H1 (cell line): ENCODE measurements at regions of chr1 and their contacts with region 1.

Region 1: GRCh38 chr1:169794530-169795416 is at the start of gene METTL18:
- DNase-seq: peak; percentile 86 to 88
- H3K4me3 ChIP-seq: peak within 1 kb of the TSS; percentile 67 to 98 (median 90)
- H3K27ac ChIP-seq: peak within 1 kb of the TSS; percentile 96
- H3K4me1 ChIP-seq: peaks cover 0 to 6% (median 4%) of the 10 kb centered on the region in 4 experiments; a peak in 3 of 7 replicates
- H3K27me3 ChIP-seq: no peaks in the 10 kb centered on the region
- CTCF ChIP-seq: peak; percentile 17 to 46 (median 30); a peak in 2 of 4 replicates
- EP300 ChIP-seq: no peak
- POLR2A ChIP-seq: peak; percentile 45 to 86
- RAD21 ChIP-seq: no peak; a peak in 2 of 4 replicates
- total RNA-seq, gene METTL18: 6.0 and 7.6 TPM in 2 replicates

Region 2: GRCh38 chr1:169784094-169784493 is 10.7 kb before region 1 on chr1:
- CTCF ChIA-PET with region 1: interaction called, 8 read pairs
- POLR2A ChIA-PET with region 1: interaction called, 11 read pairs
- DNase-seq: no peak
- H3K4me3 ChIP-seq: no peak overlapping the region
- H3K27ac ChIP-seq: no peak overlapping the region
- H3K4me1 ChIP-seq: peaks cover 0 to 17% (median 8%) of the 10 kb centered on the region in 4 experiments; a peak in 5 of 7 replicates
- H3K27me3 ChIP-seq: no peaks in the 10 kb centered on the region
- CTCF ChIP-seq: no peak
- EP300 ChIP-seq: no peak
- POLR2A ChIP-seq: no peak
- RAD21 ChIP-seq: no peak

Region 3: GRCh38 chr1:169809370-169810095 is 14.8 kb after region 1 on chr1:
- CTCF ChIA-PET with region 1: interaction called, 14 read pairs
- POLR2A ChIA-PET with region 1: interaction called, 3 read pairs
- DNase-seq: no peak
- H3K4me3 ChIP-seq: no peak overlapping the region
- H3K27ac ChIP-seq: no peak overlapping the region
- H3K4me1 ChIP-seq: no peaks in the 10 kb centered on the region
- H3K27me3 ChIP-seq: no peaks in the 10 kb centered on the region
- CTCF ChIP-seq: peak in 2 of 3 experiments; percentile 10 to 35; a peak in 2 of 4 replicates
- EP300 ChIP-seq: no peak
- POLR2A ChIP-seq: no peak
- RAD21 ChIP-seq: peak; percentile 58 to 62

Region 4: DNA sequence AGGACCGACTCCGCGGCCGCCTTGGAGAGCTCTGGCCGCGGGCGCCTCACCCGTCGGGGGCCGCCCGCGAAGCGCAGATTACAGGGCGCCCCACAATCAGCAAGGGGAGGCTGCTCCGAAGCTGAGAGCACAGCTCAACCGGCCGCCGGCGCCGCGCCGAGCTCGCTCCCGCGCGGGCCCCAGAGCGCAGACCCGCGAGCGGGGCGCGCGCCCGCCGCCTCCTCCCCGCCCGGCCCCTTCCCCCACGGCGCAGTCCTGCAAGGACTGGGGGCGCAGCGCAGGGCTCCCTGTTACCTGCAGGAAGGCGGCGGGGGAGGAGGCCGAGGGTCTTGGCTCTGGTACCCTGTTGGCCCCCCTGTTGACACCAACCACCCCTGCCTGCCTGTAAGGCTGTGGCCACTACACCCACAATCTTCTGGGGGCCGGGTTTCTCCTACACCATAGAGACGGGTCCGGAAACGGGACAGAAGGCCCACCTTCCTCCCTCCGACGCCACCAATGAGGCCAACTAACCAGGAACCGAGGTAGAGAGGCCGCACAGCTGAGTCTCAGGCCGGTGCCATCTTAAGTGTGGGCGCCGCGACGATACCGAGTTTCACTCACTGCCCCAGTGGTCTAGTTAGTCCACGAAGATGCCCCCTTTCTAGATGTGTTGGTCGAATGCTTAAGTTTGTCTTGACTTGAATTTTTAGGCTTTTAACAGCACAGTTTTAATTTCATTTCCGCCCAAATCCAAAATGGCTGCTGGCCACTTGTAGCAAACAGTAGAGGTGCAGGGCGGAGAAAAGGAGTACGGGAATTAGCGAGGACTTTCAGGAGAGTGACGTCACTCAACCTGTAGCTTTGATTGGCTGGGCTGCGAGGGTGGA is 99.0 kb after region 1 on chr1 and contains the start of gene SCYL3:
- CTCF ChIA-PET with region 1: no interaction called
- POLR2A ChIA-PET with region 1: interaction called, 12 read pairs
- DNase-seq: peak; percentile 88 to 89
- H3K4me3 ChIP-seq: peak within 1 kb of the TSS; percentile 70 to 89 (median 82)
- H3K27ac ChIP-seq: peak within 1 kb of the TSS; percentile 99
- H3K4me1 ChIP-seq: peaks cover 0 to 10% (median 7%) of the 10 kb centered on the region in 4 experiments; a peak in 4 of 7 replicates
- H3K27me3 ChIP-seq: no peaks in the 10 kb centered on the region
- CTCF ChIP-seq: no peak
- EP300 ChIP-seq: no peak
- POLR2A ChIP-seq: peak; percentile 89 to 92
- RAD21 ChIP-seq: no peak
- total RNA-seq, gene SCYL3: 4.3 and 5.3 TPM in 2 replicates